ENCODE measurements at regions of chr1 and their contacts with region 1.

Region 1: GRCh38 chr1:181099152-181100014 is 10.9 kb downstream of the IER5 start:
- DNase-seq: peak in 1 of 2 experiments; percentile 11
- H3K4me3 ChIP-seq: no peak overlapping the region
- H3K27ac ChIP-seq: peak overlapping the region; percentile 96
- H3K4me1 ChIP-seq: peaks cover 68% of the 10 kb centered on the region
- H3K27me3 ChIP-seq: no peaks in the 10 kb centered on the region
- CTCF ChIP-seq: no peak

Region 2: DNA sequence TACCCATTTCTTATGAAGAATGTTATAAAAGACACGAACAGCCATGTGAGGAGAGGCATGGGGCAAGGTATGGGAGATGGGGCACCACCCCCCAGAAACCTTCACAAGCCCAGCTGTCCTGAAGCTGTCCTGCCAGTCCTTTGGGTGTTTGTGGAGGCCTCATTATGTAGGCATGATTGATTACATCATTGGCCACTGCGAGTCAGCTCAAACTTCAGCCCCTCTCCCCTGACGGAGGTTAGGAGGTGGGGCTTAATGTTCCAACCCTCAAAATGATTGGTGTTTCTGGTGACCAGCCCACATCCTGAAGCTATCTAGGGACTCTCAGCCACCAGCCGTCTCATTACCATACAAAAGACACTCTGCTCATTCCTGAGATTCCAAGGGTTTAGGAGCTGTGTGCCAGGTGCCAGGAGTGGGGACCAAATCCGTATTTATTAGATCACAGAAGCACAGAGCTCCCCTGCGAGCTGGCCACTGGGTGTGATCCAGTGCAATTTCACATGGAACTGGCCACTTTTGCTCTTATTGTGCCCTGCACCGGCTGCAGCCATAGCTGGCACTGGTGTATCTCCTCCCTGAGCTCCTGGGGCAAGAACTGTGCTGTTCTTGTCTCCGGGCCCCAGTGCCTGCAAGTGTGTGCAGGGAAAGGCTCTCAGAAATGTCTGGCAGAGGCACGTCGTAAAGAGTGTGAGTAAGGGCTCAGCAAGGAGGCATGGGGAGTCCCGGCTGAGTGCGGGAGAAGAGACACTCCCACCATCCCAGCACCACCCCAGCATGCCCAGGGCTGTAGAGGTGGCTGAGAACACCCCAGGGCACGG is 176.2 kb before region 1 on chr1:
- CTCF ChIA-PET with region 1: no interaction called
- POLR2A ChIA-PET with region 1: interaction called, 11 read pairs
- intact Hi-C with region 1: no loop called
- DNase-seq: peak; percentile 62 to 67
- H3K4me3 ChIP-seq: no peak overlapping the region
- H3K27ac ChIP-seq: no peak overlapping the region
- H3K4me1 ChIP-seq: peaks cover 14% of the 10 kb centered on the region
- H3K27me3 ChIP-seq: no peaks in the 10 kb centered on the region; the same call in 1 of the 2 replicates
- CTCF ChIP-seq: no peak

Region 3: DNA sequence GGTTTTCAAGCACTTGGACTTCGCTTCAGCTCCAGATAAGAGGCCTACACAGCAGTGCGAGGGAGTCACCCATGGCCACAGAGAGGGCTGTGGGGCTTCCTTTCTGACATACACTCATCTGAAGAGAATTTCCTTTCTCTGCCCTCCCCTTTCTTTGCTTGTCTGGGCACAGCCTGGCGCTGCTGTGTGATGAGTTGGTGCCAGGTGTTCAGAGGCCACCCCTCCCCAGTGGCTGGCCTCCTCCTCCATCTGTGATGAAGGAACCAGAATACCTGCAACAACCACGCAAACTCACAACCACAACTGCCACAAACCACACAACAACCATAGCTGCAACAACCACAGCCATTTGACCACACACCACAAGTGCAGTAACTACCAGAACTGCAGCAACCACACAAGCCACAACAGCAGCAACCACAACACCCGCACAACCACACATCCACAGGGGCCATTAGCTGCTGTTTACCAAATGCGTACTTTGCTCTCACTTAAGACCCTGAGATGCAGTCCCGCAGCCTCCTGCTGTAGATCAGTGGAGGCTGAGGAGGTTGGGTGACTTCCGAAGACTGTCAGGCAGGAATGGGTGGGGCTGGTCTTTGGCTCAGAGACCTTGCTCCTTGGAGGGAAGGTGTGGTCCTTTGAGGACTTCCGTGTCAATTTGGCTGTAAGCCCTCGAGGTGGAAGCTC is 60.2 kb after region 1 on chr1:
- CTCF ChIA-PET with region 1: no interaction called
- POLR2A ChIA-PET with region 1: interaction called, 16 read pairs
- intact Hi-C with region 1: no loop called
- DNase-seq: peak; percentile 59 to 66
- H3K4me3 ChIP-seq: no peak overlapping the region
- H3K27ac ChIP-seq: no peak overlapping the region
- H3K4me1 ChIP-seq: peaks cover 11% of the 10 kb centered on the region; the same call in 1 of the 2 replicates
- H3K27me3 ChIP-seq: no peaks in the 10 kb centered on the region
- CTCF ChIP-seq: no peak